Activated naive CD4-positive, alpha-beta T cell treated with anti-CD3 and anti-CD28 coated beads, Interleukin-2, amount 10 ng/mL, durations not matched to agents 7 days and 5 days (primary cell): ENCODE measurements at regions of chr5 and their contacts with region 1.

Region 1: GRCh38 chr5:150544611-150545219 is 36.8 kb downstream of the NDST1 start:
- DNase-seq: peak; percentile 73
- H3K4me3 Mint-ChIP-seq: no peak overlapping the region
- H3K27ac Mint-ChIP-seq: no peak overlapping the region
- H3K4me1 Mint-ChIP-seq: no peaks in the 10 kb centered on the region
- H3K27me3 Mint-ChIP-seq: peaks cover 6% of the 10 kb centered on the region

Region 2: GRCh38 chr5:150532996-150533395 is 11.7 kb before region 1 on chr5:
- CTCF ChIA-PET with region 1: interaction called, 17 read pairs
- DNase-seq: no peak
- H3K4me3 Mint-ChIP-seq: no peak overlapping the region
- H3K27ac Mint-ChIP-seq: no peak overlapping the region
- H3K4me1 Mint-ChIP-seq: no peaks in the 10 kb centered on the region
- H3K27me3 Mint-ChIP-seq: peaks cover 4% of the 10 kb centered on the region

Region 3: DNA sequence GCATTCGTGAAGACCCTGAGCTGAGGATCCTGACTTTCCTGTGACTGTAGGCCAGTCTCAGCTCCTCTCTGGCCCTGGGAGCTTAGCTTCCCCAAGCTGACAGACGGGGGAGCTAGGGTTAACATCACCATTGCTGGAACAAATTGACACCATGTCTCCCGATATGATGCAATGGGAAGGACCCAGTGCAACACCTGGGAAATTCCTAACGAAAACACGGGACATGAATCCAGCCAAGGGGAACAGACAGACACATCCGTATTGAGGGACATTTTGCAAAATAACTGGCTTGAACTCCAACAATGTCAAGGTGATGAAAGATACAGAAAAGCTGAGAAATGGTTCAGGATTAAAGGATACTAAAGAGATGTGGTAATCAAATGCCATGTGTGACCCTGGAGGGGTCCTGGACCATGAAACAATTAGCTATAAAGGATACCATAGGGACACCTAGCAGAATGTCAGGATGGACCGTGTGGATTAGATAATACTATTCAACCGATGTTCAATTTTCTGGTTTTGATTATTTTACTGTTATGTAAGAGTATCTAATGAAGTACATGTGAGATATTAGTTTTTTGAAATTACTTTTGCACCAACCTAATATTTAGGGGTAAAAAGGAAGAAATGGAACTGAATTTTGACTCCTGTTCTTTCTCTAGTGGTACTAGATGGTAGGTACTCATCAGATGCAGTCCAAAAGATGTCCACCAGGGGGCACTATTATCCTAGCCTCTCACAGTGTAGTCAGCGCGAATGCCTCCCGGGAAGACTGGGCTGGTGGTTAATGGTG is 15.9 kb after region 1 on chr5:
- CTCF ChIA-PET with region 1: interaction called, 11 read pairs
- DNase-seq: peak; percentile 91
- H3K4me3 Mint-ChIP-seq: no peak overlapping the region
- H3K27ac Mint-ChIP-seq: no peak overlapping the region
- H3K4me1 Mint-ChIP-seq: no peaks in the 10 kb centered on the region
- H3K27me3 Mint-ChIP-seq: peaks cover 7% of the 10 kb centered on the region